CD4-positive, alpha-beta T cell (primary cell): ENCODE measurements at regions of chr7 and their contacts with region 1.

Region 1: DNA sequence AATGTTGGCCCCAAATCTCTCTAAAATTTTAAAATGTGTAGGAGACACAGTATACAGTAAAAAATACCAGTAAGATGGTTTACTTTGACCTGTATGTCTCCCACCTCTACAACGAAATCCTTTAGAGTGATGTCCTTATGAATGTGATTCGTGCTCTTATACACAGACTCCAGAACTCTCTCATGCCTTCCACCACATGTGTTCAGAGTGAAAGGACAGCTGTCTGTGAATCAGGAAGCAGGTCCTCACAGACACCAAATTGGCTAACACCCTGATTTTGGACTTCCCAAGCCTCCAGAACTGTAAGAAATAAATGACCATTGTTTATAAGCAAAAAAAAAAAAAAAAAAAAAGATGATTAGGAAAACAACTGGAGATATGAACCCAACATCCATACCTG is 35.2 kb downstream of the RNF133 start:
- DNase-seq: no peak
- ATAC-seq: no peak
- H3K4me3 ChIP-seq: no peak overlapping the region
- H3K4me3 Mint-ChIP-seq: no peak overlapping the region
- H3K27ac ChIP-seq: no peak overlapping the region
- H3K27ac Mint-ChIP-seq: no peak overlapping the region
- H3K4me1 ChIP-seq: no peaks in the 10 kb centered on the region
- H3K4me1 Mint-ChIP-seq: no peaks in the 10 kb centered on the region
- H3K27me3 ChIP-seq: no peaks in the 10 kb centered on the region
- H3K27me3 Mint-ChIP-seq: no peaks in the 10 kb centered on the region
- CTCF ChIP-seq: no peak

Region 2: GRCh38 chr7:121084748-121085336 is 1578.9 kb before region 1 on chr7:
- CTCF ChIA-PET with region 1: no interaction called
- POLR2A ChIA-PET with region 1: no interaction called
- intact Hi-C with region 1: no loop called
- DNase-seq: no peak
- ATAC-seq: no peak
- H3K4me3 ChIP-seq: no peak overlapping the region
- H3K4me3 Mint-ChIP-seq: no peak overlapping the region
- H3K27ac ChIP-seq: no peak overlapping the region
- H3K27ac Mint-ChIP-seq: no peak overlapping the region
- H3K4me1 ChIP-seq: no peaks in the 10 kb centered on the region
- H3K4me1 Mint-ChIP-seq: no peaks in the 10 kb centered on the region
- H3K27me3 ChIP-seq: peaks cover 0 to 4% of the 10 kb centered on the region in 2 experiments
- H3K27me3 Mint-ChIP-seq: peaks cover 6% of the 10 kb centered on the region
- CTCF ChIP-seq: no peak

Region 3: DNA sequence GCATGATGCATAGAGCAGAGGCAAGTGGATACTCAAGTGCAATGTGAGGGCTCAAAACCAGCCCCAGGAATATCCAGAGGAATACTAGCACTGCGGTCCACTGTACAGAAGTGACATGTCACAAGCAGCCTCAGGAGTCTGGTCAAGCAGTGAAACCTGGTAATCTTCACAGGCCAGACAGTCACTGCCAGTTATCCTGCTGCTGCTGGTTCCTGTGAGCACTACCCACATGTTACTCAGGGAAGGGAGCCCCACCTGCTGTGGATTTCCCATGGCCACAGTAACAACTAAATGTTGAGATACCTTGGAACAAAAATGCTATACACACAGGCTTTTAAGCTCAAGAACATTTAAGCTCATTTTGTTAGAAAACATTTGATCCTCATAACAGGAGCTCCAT is 67.8 kb before region 1 on chr7:
- CTCF ChIA-PET with region 1: no interaction called
- POLR2A ChIA-PET with region 1: no interaction called
- intact Hi-C with region 1: no loop called
- DNase-seq: no peak
- ATAC-seq: no peak
- H3K4me3 ChIP-seq: no peak overlapping the region
- H3K4me3 Mint-ChIP-seq: no peak overlapping the region
- H3K27ac ChIP-seq: no peak overlapping the region
- H3K27ac Mint-ChIP-seq: no peak overlapping the region
- H3K4me1 ChIP-seq: no peaks in the 10 kb centered on the region
- H3K4me1 Mint-ChIP-seq: no peaks in the 10 kb centered on the region
- H3K27me3 ChIP-seq: no peaks in the 10 kb centered on the region
- H3K27me3 Mint-ChIP-seq: no peaks in the 10 kb centered on the region
- CTCF ChIP-seq: no peak

Region 4: DNA sequence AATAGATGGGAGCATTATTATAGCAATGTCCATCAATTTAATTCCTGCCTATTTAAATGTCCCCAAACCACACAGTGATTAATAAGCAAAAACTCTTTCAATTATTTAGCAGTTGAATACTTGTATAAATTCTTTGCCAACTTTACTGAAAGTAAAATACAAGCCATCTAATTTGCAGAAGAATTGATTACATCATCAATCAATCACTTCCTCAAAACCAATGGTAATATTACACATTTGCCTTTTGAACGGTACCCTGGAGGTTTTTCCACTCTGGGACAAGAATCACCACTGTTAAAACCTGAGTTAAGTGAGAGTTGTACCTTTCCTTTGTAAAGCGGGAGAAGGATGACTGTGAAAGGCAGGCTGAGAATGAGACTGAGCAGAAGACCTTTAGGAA is 57.8 kb before region 1 on chr7:
- CTCF ChIA-PET with region 1: no interaction called
- POLR2A ChIA-PET with region 1: no interaction called
- intact Hi-C with region 1: no loop called
- DNase-seq: no peak
- ATAC-seq: no peak
- H3K4me3 ChIP-seq: no peak overlapping the region
- H3K4me3 Mint-ChIP-seq: no peak overlapping the region
- H3K27ac ChIP-seq: no peak overlapping the region
- H3K27ac Mint-ChIP-seq: no peak overlapping the region
- H3K4me1 ChIP-seq: no peaks in the 10 kb centered on the region
- H3K4me1 Mint-ChIP-seq: no peaks in the 10 kb centered on the region
- H3K27me3 ChIP-seq: no peaks in the 10 kb centered on the region
- H3K27me3 Mint-ChIP-seq: no peaks in the 10 kb centered on the region
- CTCF ChIP-seq: no peak

Region 5: DNA sequence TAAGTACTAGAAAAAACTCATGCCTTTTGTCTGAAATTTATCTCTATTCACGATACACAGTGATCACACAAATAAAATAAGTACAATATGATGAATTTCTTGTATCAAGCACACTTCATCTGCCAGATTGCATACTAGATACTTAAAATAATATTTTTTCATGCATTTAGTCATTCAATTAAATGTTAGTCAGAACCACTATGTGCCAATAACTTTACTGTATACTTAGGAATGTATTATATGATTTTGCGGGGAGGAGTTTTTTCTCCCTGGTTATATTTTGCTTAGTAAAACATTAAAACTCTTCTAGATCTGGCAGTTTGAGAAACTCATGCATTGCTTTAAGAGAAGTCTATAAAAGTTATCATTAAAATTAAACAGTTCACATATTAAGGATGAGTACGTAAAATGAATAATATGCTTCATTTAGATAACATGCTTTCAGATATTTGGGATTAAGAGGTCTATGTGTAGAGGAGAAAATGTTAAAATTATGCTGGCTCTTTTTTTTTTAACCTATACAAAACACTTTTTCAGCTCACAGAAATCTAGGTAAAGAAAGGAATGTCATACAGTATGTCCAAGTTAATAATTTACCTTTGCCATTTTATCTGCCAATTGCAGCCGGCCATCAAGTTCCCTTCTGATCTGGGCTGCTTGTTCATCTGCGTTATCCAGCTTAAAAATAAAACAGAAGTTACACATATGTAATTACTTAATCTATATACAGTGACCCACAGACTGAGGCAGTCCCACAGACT is 34.9 kb before region 1 on chr7:
- CTCF ChIA-PET with region 1: no interaction called
- POLR2A ChIA-PET with region 1: no interaction called
- intact Hi-C with region 1: loop called in 1 of 2 experiments (anchors 2 kb)
- DNase-seq: no peak
- ATAC-seq: no peak
- H3K4me3 ChIP-seq: no peak overlapping the region
- H3K4me3 Mint-ChIP-seq: no peak overlapping the region
- H3K27ac ChIP-seq: no peak overlapping the region
- H3K27ac Mint-ChIP-seq: no peak overlapping the region
- H3K4me1 ChIP-seq: no peaks in the 10 kb centered on the region
- H3K4me1 Mint-ChIP-seq: no peaks in the 10 kb centered on the region
- H3K27me3 ChIP-seq: no peaks in the 10 kb centered on the region
- H3K27me3 Mint-ChIP-seq: no peaks in the 10 kb centered on the region
- CTCF ChIP-seq: no peak